Endothelial cell of umbilical vein (primary cell): ENCODE measurements at regions of chr14 and their contacts with region 1.

Region 1: GRCh38 chr14:54338696-54339317 is 58.0 kb upstream of the CDKN3 start:
- DNase-seq: peak; percentile 78
- H3K4me3 ChIP-seq: no peak overlapping the region
- H3K27ac ChIP-seq: no peak overlapping the region
- H3K4me1 ChIP-seq: peaks cover 10% of the 10 kb centered on the region
- H3K27me3 ChIP-seq: no peaks in the 10 kb centered on the region
- CTCF ChIP-seq: peak; percentile 63 to 68
- POLR2A ChIP-seq: no peak

Region 2: DNA sequence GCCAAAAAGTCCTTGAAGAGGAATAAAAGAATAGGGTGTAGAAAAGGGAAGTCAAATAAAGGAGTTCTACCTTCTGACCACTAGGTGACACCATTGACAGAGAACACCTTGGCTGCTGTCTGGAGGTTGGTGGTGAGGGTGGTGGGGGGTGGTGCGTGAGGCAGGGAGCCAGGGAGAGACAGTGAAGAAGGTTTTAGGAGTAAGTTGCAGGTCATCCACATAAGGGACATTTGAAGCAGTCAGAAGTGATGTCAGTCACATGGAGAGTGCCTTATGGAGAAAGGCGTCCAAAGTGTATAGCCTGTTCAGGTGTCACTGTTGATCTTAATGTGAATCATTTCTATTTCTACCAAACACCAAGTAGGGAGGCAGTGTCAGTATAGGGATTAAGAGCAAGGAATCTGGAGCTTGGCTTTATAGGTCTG is 906.4 kb before region 1 on chr14:
- CTCF ChIA-PET with region 1: interaction called, 18 read pairs
- POLR2A ChIA-PET with region 1: no interaction called
- dilution Hi-C with region 1: no loop called
- intact Hi-C with region 1: loop called (anchors 2 kb)
- DNase-seq: peak; percentile 70
- H3K4me3 ChIP-seq: no peak overlapping the region
- H3K27ac ChIP-seq: no peak overlapping the region
- H3K4me1 ChIP-seq: no peaks in the 10 kb centered on the region
- H3K27me3 ChIP-seq: peaks cover 6 to 14% of the 10 kb centered on the region in 2 experiments
- CTCF ChIP-seq: peak; percentile 64 to 68
- POLR2A ChIP-seq: no peak

Region 3: DNA sequence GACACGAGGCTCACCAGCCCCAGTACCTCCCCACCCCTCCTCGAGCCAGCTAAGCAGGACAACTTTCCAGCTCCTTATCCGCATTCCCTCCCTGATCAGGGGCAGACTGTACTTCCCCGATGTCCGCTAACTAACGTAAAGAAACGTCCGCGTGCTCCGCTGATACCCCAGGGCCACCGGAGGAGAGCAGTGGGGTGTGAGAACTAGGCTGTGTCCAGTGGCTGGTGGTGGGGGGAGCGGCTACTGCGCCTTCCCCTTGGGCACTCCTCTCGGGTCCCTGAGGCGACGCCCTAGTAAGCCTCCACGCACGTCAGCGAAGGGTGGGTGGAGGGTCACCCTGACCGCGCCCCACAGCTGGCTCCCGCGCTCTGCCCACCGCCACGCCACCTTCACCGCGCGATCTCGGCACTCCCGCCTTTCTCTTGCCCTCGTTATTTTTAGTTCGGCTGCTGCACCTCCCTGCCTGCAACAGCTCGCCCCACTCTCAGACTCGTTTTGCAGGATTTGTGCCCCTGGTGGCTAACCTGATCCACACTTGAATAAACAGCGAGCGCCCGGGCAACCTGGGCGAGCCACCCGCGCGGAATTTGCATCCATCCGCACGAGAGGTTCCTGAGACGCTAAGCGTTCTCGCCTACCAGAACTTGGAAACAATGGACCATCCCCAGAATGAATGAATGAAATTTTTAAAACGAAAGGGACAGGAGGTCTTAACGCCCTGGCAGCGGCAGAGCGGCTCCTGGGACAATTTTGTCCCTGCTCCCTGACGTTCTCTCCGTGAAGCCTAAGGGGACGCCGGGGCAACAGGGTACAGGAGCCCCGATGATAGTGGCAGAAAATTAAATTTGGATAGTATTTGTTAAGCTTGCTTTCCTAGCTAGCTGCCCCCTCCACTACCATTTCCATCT is 375.2 kb before region 1 on chr14:
- CTCF ChIA-PET with region 1: interaction called, 15 read pairs
- POLR2A ChIA-PET with region 1: no interaction called
- dilution Hi-C with region 1: no loop called
- intact Hi-C with region 1: no loop called
- DNase-seq: peak; percentile 44
- H3K4me3 ChIP-seq: peak overlapping the region in 2 of 3 experiments; percentile 0 to 35
- H3K27ac ChIP-seq: no peak overlapping the region
- H3K4me1 ChIP-seq: peaks cover 4% of the 10 kb centered on the region
- H3K27me3 ChIP-seq: peaks cover 0 to 3% of the 10 kb centered on the region in 2 experiments
- CTCF ChIP-seq: peak; percentile 44 to 60
- POLR2A ChIP-seq: no peak

Region 4: GRCh38 chr14:54106661-54107377 is 232.0 kb before region 1 on chr14:
- CTCF ChIA-PET with region 1: no interaction called
- POLR2A ChIA-PET with region 1: no interaction called
- dilution Hi-C with region 1: no loop called
- intact Hi-C with region 1: no loop called
- DNase-seq: no peak
- H3K4me3 ChIP-seq: no peak overlapping the region
- H3K27ac ChIP-seq: peak overlapping the region; percentile 42
- H3K4me1 ChIP-seq: peaks cover 41% of the 10 kb centered on the region
- H3K27me3 ChIP-seq: no peaks in the 10 kb centered on the region
- CTCF ChIP-seq: no peak
- POLR2A ChIP-seq: no peak

Region 5: GRCh38 chr14:54169254-54169924 is 169.4 kb before region 1 on chr14:
- CTCF ChIA-PET with region 1: interaction called, 73 read pairs
- POLR2A ChIA-PET with region 1: no interaction called
- dilution Hi-C with region 1: no loop called
- intact Hi-C with region 1: no loop called
- DNase-seq: peak; percentile 90
- H3K4me3 ChIP-seq: no peak overlapping the region
- H3K27ac ChIP-seq: peak overlapping the region; percentile 59
- H3K4me1 ChIP-seq: peaks cover 54% of the 10 kb centered on the region
- H3K27me3 ChIP-seq: no peaks in the 10 kb centered on the region
- CTCF ChIP-seq: no peak
- POLR2A ChIP-seq: no peak

Region 6: GRCh38 chr14:54211551-54212308 is 127.1 kb before region 1 on chr14:
- CTCF ChIA-PET with region 1: interaction called, 3 read pairs
- POLR2A ChIA-PET with region 1: no interaction called
- dilution Hi-C with region 1: no loop called
- intact Hi-C with region 1: loop called (anchors 2 kb)
- DNase-seq: peak; percentile 86
- H3K4me3 ChIP-seq: no peak overlapping the region
- H3K27ac ChIP-seq: peak overlapping the region; percentile 91
- H3K4me1 ChIP-seq: peaks cover 25% of the 10 kb centered on the region
- H3K27me3 ChIP-seq: no peaks in the 10 kb centered on the region
- CTCF ChIP-seq: no peak
- POLR2A ChIP-seq: no peak